Kidney (tissue), 22 donors: ENCODE measurements at regions of chr18 and their contacts with region 1.

Region 1: GRCh38 chr18:35005963-35006577 is 35.1 kb upstream of the MAPRE2 start:
- DNase-seq: peak in 3 of 5 donors; percentile 26 to 86 (median 82)
- H3K4me3 ChIP-seq: no peak overlapping the region
- H3K27ac ChIP-seq: no peak overlapping the region
- H3K4me1 ChIP-seq: no peaks in the 10 kb centered on the region
- H3K27me3 ChIP-seq: no peaks in the 10 kb centered on the region
- CTCF ChIP-seq: peak; percentile 70

Region 2: GRCh38 chr18:35143622-35144596 is 137.8 kb after region 1 on chr18:
- intact Hi-C with region 1: loop called (anchors 5 kb)
- DNase-seq: peak in 4 of 5 donors; percentile 51 to 79 (median 70)
- H3K4me3 ChIP-seq: no peak overlapping the region
- H3K27ac ChIP-seq: no peak overlapping the region
- H3K4me1 ChIP-seq: peaks cover 0 to 4% (median 4%) of the 10 kb centered on the region in 3 donors
- H3K27me3 ChIP-seq: no peaks in the 10 kb centered on the region
- CTCF ChIP-seq: peak; percentile 76

Region 3: DNA sequence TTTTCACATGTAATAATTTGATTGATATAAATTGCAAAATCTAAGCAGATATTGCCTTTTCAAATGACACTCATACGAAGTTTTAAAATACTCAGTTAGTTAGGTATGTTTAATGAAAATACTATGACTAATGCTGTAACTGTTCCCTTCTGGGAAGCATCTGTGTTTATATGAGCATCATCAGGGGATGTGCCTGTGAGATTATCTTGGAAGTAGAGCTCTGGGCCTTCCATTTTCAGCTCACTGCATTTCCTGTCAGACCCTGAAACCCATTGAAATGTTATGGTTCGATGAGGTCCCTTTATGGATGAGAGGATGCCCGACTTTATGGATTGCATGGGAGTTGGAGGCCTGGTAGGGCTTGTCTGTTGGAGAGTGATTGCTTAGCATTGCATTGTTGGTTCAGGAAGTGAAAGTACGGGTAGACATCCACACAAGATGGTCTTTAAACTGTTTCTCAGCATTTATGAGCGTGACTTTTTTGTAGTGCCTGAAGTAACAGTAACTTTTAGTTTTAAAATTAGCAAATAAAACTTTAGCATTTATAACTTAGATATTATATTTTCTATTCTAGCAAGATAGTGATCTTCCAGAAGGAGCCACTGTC is 1152.3 kb after region 1 on chr18:
- intact Hi-C with region 1: no loop called
- DNase-seq: no peak
- H3K4me3 ChIP-seq: no peak overlapping the region
- H3K27ac ChIP-seq: no peak overlapping the region
- H3K4me1 ChIP-seq: no peaks in the 10 kb centered on the region
- H3K27me3 ChIP-seq: no peaks in the 10 kb centered on the region
- CTCF ChIP-seq: no peak